T-cell (primary cell): ENCODE measurements at regions of chr9 and their contacts with region 1.

Region 1: DNA sequence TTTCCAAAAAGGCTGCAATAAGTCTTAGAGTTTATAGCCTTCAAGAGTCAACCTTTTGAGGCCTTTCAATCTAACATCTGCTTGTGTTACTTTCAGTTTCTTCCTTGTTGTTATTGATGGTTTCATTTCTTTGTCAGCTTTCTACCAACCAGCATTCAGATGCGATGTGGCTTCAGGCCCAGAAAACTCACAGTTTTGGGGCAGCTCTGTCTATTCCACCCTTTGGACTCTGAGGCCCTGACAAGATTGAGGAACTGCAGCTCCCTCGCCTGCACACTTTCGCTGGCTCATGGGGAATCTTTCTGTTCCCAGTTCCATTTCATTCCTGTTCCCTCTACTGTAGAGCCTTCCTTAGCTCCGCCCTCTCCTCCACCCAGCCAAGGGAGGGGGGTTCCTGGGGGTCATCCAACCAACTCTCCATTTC is 13.3 kb upstream of the WHRN start:
- DNase-seq: no peak
- ATAC-seq: no peak
- H3K4me3 ChIP-seq: no peak overlapping the region
- H3K4me3 Mint-ChIP-seq: no peak overlapping the region
- H3K27ac ChIP-seq: no peak overlapping the region
- H3K27ac Mint-ChIP-seq: peak overlapping the region; percentile 34 to 40
- H3K4me1 ChIP-seq: peaks cover 3% of the 10 kb centered on the region in 2 experiments
- H3K4me1 Mint-ChIP-seq: peaks cover 6 to 13% (median 8%) of the 10 kb centered on the region in 3 donors
- H3K27me3 ChIP-seq: peaks cover 0 to 7% of the 10 kb centered on the region in 2 experiments
- H3K27me3 Mint-ChIP-seq: peaks cover 5 to 9% of the 10 kb centered on the region in 2 donors

Region 2: GRCh38 chr9:114718801-114719221 is 200.2 kb after region 1 on chr9:
- CTCF ChIA-PET with region 1: interaction called in 1 of 2 experiments, 13 read pairs
- POLR2A ChIA-PET with region 1: no interaction called
- DNase-seq: peak; percentile 21 to 78 (median 50)
- ATAC-seq: peak; percentile 92 to 95 (median 93)
- H3K4me3 ChIP-seq: no peak overlapping the region
- H3K4me3 Mint-ChIP-seq: peak overlapping the region; percentile 10 to 66 (median 22)
- H3K27ac ChIP-seq: peak overlapping the region; percentile 68
- H3K27ac Mint-ChIP-seq: peak overlapping the region; percentile 92 to 95
- H3K4me1 ChIP-seq: peaks cover 0 to 43% of the 10 kb centered on the region in 2 experiments
- H3K4me1 Mint-ChIP-seq: peaks cover 34 to 56% (median 40%) of the 10 kb centered on the region in 3 donors
- H3K27me3 ChIP-seq: no peaks in the 10 kb centered on the region
- H3K27me3 Mint-ChIP-seq: peaks cover 0 to 3% of the 10 kb centered on the region in 2 donors